Esophagus muscularis mucosa (tissue), 4 donors: ENCODE measurements at regions of chrX and their contacts with region 1.

Region 1: DNA sequence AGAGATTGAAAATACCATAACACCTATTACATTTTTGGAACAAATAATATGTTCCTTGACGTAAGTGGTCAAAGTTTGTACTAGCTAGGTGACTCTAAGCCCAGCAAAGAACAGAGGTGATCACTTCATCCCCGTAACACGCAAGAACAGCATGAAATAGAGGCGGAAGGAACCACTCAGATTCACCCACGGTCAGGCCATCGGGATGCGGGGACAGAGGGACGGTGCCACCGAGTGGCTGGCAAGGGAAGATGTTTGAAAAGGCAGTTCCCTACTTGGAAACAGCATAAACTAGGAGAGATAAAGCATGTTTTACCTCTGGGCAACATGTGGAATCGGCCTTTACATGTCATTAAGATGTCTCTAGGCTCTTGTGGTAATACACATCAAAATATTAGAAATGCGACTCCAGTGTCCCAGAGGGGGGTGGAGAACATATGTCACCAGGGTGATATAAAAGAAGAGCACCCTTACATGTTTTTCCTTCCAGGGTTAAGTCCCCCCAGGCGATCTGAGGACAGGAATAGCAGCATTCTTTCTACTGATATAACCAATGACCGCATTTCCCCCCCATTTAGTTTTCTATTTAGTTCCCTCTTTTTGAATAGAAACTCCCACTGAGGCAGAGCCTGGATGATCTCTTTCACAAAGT is 84.0 kb downstream of the PHKA2 start:
- DNase-seq: no peak
- H3K4me3 ChIP-seq: no peak overlapping the region
- H3K27ac ChIP-seq: no peak overlapping the region
- H3K4me1 ChIP-seq: peaks cover 0 to 16% (median 12%) of the 10 kb centered on the region in 4 donors
- H3K27me3 ChIP-seq: no peaks in the 10 kb centered on the region
- CTCF ChIP-seq: peak in 1 of 3 experiments; percentile 21
- EP300 ChIP-seq: no peak
- POLR2A ChIP-seq: no peak

Region 2: DNA sequence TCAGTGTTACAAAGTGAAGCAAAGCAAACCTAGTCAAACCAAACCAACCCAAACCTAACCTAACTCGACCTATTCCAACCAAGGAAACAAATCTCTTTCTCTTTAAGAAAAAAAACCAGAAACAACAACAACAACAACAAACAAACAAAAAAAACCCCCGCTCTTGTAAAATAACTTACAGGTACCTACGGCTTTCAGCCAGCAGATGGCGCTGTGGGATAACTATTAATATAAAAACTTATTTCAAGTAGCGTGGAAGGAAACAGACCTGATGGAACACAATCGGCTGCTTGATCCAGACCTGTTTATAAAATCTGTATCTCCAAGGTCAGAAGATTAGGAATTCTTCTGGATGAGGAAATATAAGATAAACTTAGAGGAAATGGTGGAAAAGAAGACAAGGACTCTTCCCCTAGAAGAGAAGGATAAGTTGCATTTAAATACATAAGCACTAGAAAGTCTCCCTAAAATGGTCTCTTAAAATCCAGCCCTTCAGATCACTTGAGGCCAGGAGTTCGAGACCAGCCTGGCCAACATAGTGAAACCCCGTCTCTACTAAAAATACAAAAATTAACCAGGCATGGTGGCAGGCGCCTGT is 508.9 kb before region 1 on chrX:
- intact Hi-C with region 1: loop called (anchors 5 kb)
- DNase-seq: no peak
- H3K4me3 ChIP-seq: no peak overlapping the region
- H3K27ac ChIP-seq: no peak overlapping the region
- H3K4me1 ChIP-seq: no peaks in the 10 kb centered on the region
- H3K27me3 ChIP-seq: no peaks in the 10 kb centered on the region
- CTCF ChIP-seq: peak; percentile 66 to 88 (median 76)
- EP300 ChIP-seq: no peak
- POLR2A ChIP-seq: no peak

Region 3: GRCh38 chrX:19121898-19122640 is 222.1 kb after region 1 on chrX and contains the start of gene ADGRG2:
- intact Hi-C with region 1: no loop called
- DNase-seq: no peak
- H3K4me3 ChIP-seq: peak within 1 kb of the TSS; percentile 49 to 63 (median 49)
- H3K27ac ChIP-seq: peak within 1 kb of the TSS in 1 of 4 donors; percentile 20
- H3K4me1 ChIP-seq: peaks cover 0 to 11% (median 8%) of the 10 kb centered on the region in 4 donors
- H3K27me3 ChIP-seq: peaks cover 0 to 24% (median 10%) of the 10 kb centered on the region in 4 donors
- CTCF ChIP-seq: peak in 1 of 3 experiments; percentile 5
- EP300 ChIP-seq: no peak
- POLR2A ChIP-seq: no peak
- total RNA-seq, gene ADGRG2: 0.83 to 2.7 (median 2.1) TPM